Dendritic cell treated with granulocyte-macrophage colony-stimulating factor and Interleukin-4, amounts not matched to agents 40 ng/mL and 50 ng/mL, for 4 days (primary cell): ENCODE measurements at regions of chr14 and their contacts with region 1.

Region 1: DNA sequence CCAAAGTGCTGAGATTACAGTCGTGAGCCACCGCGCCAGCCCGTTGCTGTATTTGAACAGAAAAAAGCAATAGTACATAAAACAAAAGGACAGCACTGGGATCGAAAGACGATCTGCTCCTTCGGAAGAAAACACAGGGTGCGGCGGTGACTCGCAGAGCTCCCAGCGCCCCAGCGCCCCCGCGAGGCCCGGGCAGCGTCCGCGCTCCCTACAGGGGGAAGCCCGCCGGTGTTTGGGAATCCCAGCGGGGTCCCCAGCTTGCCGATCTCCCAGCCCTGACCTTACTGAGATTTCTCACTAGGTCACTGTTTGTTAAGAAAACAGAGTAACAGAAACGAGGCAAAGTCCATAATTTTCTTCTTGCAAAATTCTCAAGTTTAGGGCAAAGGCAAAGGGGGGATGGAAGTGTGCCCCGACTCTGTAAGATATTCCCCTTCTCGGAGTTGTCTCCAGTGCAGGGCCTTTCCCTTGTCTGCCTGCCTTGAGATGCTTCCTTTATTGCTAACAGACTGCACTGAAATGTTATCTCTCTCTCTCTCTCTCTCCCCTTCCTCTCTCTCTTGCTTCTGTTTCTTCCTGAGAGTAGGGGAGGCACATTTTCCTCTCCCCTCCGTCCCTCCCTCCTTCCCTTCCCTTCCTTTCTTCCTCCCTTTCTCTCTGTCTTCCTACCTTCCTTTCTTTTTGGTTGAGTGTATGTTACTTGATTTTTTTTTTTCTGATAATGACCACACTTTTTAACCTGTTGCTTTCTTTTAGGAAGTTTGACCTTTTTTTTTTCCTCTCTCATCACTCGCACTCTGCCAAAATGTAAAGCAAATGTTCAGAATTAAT is 91.9 kb downstream of the TMEM30B start:
- H3K4me3 Mint-ChIP-seq: peak overlapping the region; percentile 75
- H3K27ac Mint-ChIP-seq: peak overlapping the region; percentile 66
- H3K4me1 Mint-ChIP-seq: peaks cover 24% of the 10 kb centered on the region
- H3K27me3 Mint-ChIP-seq: peaks cover 76% of the 10 kb centered on the region

Region 2: DNA sequence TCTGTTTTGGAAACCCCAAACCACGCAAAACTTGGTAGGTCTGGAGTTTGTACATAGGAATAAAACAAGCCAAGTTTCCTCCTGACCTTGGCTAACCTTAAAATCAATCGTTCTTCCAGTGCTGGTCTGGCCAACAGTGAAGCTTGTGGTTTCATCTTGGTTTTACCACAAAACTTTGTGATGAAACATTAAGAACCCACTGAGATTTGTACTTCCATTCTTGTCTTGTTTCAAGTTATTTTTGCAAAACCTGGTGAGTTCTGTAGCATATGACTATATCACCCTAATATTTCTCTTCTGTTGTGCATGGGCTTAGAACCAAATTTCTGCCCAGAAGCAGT is 566.3 kb before region 1 on chr14:
- intact Hi-C with region 1: loop called (anchors 1 kb)
- H3K4me3 Mint-ChIP-seq: no peak overlapping the region
- H3K27ac Mint-ChIP-seq: no peak overlapping the region
- H3K4me1 Mint-ChIP-seq: peaks cover 5% of the 10 kb centered on the region
- H3K27me3 Mint-ChIP-seq: peaks cover 50% of the 10 kb centered on the region

Region 3: GRCh38 chr14:61537563-61538463 is 348.6 kb after region 1 on chr14:
- intact Hi-C with region 1: no loop called
- H3K4me3 Mint-ChIP-seq: no peak overlapping the region
- H3K27ac Mint-ChIP-seq: peak overlapping the region; percentile 51
- H3K4me1 Mint-ChIP-seq: peaks cover 20% of the 10 kb centered on the region
- H3K27me3 Mint-ChIP-seq: no peaks in the 10 kb centered on the region